ENCODE measurements at regions of chr2 and their contacts with region 1.

Region 1: DNA sequence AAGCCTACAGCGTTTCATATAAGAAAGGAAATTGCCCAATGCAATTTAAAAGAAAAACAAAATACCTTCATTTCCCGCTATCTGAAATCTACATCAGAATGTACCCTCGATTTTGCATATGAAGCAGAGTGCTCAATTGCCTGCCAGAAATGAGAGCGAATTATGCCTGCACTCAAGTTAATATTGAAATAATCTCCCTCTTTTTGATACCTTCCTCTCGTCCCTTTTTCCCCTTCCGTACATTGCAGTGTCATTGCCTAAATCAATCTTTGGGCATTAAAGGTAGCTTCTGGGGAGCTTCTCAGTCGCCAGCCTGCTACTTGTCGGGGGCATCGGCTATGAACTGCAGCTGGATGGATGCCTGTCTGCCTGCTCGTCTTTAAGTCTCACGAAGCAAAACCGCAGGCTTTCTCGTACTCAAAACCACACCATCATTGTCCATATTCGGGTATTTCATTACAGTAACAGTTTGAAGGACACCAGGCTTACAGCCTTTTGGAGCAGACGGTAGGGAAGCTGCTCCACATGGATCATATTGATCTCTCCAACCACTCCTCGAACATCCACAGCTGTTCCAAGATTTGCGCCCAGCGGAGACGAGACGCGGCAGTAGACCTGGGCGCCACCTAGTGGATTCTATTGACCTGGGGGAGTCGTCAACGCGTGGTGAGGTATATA is 64.0 kb upstream of the HNRNPA3 start:
- DNase-seq: peak; percentile 45
- ATAC-seq: peak; percentile 95
- H3K4me3 ChIP-seq: peak overlapping the region; percentile 69
- H3K27ac ChIP-seq: no peak overlapping the region
- H3K4me1 ChIP-seq: no peaks in the 10 kb centered on the region
- H3K27me3 ChIP-seq: peaks cover 0 to 2% of the 10 kb centered on the region in 2 experiments; a peak in 1 of 4 replicates
- CTCF ChIP-seq: peak; percentile 87 to 93 (median 92)
- EP300 ChIP-seq: 0 out of 4 replicates have a peak, but pooled peaks of 1 of the 2 experiments have one; percentile 13
- POLR2A ChIP-seq: no peak
- RAD21 ChIP-seq: peak; percentile 67

Region 2: GRCh38 chr2:176110975-176111663 is 1037.5 kb before region 1 on chr2:
- CTCF ChIA-PET with region 1: interaction called, 12 read pairs
- POLR2A ChIA-PET with region 1: no interaction called
- RAD21 ChIA-PET with region 1: no interaction called
- SMC1A ChIA-PET with region 1: no interaction called
- in situ Hi-C with region 1: no loop called
- intact Hi-C with region 1: no loop called
- DNase-seq: no peak
- ATAC-seq: peak; percentile 79
- H3K4me3 ChIP-seq: no peak overlapping the region
- H3K27ac ChIP-seq: no peak overlapping the region
- H3K4me1 ChIP-seq: no peaks in the 10 kb centered on the region
- H3K27me3 ChIP-seq: peaks cover 14 to 35% of the 10 kb centered on the region in 2 experiments
- CTCF ChIP-seq: peak; percentile 60 to 79 (median 60); a peak in 5 of 6 replicates
- EP300 ChIP-seq: no peak
- POLR2A ChIP-seq: no peak
- RAD21 ChIP-seq: 0 out of 2 replicates have a peak, but pooled peaks have one; percentile 24

Region 3: DNA sequence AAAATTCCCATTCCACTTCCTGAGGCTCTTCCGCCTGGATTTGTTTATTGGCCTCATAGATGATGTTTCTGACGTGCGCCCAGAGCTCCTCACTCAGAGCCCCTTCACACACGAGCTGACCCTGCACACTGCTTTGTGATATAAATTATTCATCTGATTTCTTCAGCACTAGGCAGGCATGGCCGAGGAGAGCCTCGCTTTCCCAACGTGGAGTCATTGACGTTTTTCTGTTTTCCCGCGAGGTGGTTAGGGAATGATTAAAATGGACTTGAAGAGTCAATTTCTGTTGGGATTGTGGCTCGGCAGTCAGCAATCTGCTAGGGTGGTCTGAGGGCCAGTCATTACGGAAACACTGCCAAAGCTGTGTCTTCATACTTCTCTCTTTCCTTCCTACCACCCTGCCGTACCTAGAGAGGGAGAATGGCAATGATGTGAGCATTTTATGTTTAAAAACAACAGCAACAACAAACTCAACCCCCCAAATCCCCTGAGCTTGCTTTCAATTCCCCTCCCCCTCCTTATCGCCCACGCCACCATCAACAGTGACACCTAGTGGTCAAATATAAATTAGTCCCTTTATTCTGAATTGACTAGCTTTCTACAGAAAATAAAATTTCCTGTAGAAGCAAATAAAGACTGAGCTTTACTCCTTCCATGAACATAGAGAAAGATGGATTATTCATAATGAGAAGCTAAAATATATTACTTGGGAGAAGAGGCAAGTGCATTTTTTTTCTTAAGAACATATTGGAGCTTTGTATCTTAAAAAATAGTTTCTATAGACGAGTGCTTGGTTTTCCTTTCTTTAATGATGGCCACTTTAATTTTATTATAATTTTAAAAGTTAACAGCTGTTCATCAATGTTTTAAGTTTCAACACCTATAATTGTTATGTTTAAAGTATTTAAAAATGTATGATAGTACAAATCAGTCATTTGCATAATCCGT is 594.2 kb before region 1 on chr2:
- CTCF ChIA-PET with region 1: interaction called, 19 read pairs
- POLR2A ChIA-PET with region 1: no interaction called
- RAD21 ChIA-PET with region 1: interaction called, 18 read pairs
- SMC1A ChIA-PET with region 1: interaction called, 16 read pairs
- in situ Hi-C with region 1: no loop called
- intact Hi-C with region 1: loop called (anchors 5 kb)
- DNase-seq: peak; percentile 8
- ATAC-seq: peak; percentile 79
- H3K4me3 ChIP-seq: peak overlapping the region; percentile 32; the same call in 1 of the 2 replicates
- H3K27ac ChIP-seq: no peak overlapping the region
- H3K4me1 ChIP-seq: no peaks in the 10 kb centered on the region
- H3K27me3 ChIP-seq: 0 out of 4 replicates have a peak, but pooled peaks cover 0 to 3% of the 10 kb centered on the region in 2 experiments
- CTCF ChIP-seq: peak; percentile 58 to 78 (median 70)
- EP300 ChIP-seq: no peak
- POLR2A ChIP-seq: no peak
- RAD21 ChIP-seq: peak; percentile 82

Region 4: DNA sequence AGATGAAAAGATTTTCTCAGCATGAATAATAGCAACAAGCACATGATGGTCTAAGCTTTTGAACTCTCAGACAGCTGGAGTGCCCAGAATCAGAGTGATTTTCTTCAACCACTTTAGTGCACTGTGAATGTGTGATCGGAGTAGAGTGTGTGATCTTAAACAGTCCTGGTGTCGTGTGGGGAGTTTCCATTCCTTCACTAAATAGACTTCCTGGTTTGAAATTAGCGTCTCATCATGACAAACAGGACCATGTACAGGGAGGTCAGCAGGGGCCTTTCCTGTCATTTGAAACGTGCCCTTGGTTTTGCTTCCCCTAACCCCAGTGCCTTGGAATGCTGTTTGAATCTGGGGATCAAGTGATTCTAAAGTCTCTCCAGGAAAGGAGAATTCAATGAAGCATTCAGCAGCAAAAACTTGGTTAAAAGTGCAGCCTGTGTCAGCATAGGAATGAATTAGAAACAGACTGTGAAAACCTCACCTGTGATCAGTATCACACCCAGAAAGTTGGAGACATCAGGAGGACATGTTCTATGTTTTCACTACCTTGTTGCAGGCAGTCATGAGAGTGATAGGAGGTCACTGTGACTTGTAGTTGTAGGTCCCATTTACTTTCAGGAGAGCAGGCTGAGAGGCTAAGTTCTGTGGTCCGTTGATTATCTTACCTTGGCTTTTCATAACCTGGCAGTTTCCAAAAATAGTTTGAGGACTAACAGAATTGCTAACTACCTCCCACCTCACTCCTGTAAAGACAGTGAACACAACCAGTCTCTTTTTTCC is 479.0 kb before region 1 on chr2:
- CTCF ChIA-PET with region 1: interaction called, 11 read pairs
- POLR2A ChIA-PET with region 1: no interaction called
- RAD21 ChIA-PET with region 1: interaction called, 6 read pairs
- SMC1A ChIA-PET with region 1: interaction called, 11 read pairs
- in situ Hi-C with region 1: loop called (anchors 5 kb)
- intact Hi-C with region 1: no loop called
- DNase-seq: peak; percentile 37
- ATAC-seq: peak; percentile 86
- H3K4me3 ChIP-seq: no peak overlapping the region
- H3K27ac ChIP-seq: peak overlapping the region; percentile 48; the same call in 1 of the 2 replicates
- H3K4me1 ChIP-seq: peaks cover 4% of the 10 kb centered on the region
- H3K27me3 ChIP-seq: no peaks in the 10 kb centered on the region
- CTCF ChIP-seq: no peak
- EP300 ChIP-seq: 0 out of 4 replicates have a peak, but pooled peaks of 1 of the 2 experiments have one; percentile 22
- POLR2A ChIP-seq: no peak
- RAD21 ChIP-seq: no peak

Region 5: GRCh38 chr2:176830362-176830761 is 318.3 kb before region 1 on chr2:
- CTCF ChIA-PET with region 1: interaction called, 250 read pairs
- POLR2A ChIA-PET with region 1: no interaction called
- RAD21 ChIA-PET with region 1: interaction called, 8 read pairs
- SMC1A ChIA-PET with region 1: interaction called, 6 read pairs
- in situ Hi-C with region 1: no loop called
- intact Hi-C with region 1: loop called (anchors 5 kb)
- DNase-seq: no peak
- ATAC-seq: peak; percentile 80
- H3K4me3 ChIP-seq: no peak overlapping the region
- H3K27ac ChIP-seq: no peak overlapping the region
- H3K4me1 ChIP-seq: no peaks in the 10 kb centered on the region
- H3K27me3 ChIP-seq: no peaks in the 10 kb centered on the region
- CTCF ChIP-seq: peak in 2 of 3 experiments; percentile 20 to 21; a peak in 3 of 6 replicates
- EP300 ChIP-seq: no peak
- POLR2A ChIP-seq: no peak
- RAD21 ChIP-seq: no peak

Region 6: DNA sequence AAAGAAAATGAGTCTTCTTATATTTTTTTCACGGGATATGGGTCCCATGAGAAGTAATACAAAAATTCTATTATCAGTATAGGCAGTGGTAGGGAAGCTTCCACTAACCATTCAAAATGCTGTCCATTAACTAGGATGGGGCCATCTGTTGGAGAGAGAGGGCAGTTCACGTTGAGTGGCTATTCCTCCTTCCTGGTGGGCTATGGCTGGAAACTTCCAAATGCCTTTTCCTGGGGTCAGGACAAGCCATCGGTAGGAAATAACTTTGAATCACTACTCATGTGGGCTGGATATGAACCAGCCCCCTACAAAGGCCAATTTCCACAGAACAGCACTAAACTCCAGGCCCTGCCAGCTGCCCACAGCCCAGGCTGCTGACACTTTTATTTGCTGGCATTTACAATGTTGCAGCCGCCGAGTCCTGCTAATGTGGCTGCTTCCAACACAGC is 92.1 kb before region 1 on chr2:
- CTCF ChIA-PET with region 1: interaction called, 16 read pairs
- POLR2A ChIA-PET with region 1: no interaction called
- RAD21 ChIA-PET with region 1: interaction called, 5 read pairs
- SMC1A ChIA-PET with region 1: interaction called, 3 read pairs
- in situ Hi-C with region 1: no loop called
- intact Hi-C with region 1: no loop called
- DNase-seq: no peak
- ATAC-seq: peak; percentile 61; the same call in 2 of the 3 replicates
- H3K4me3 ChIP-seq: no peak overlapping the region
- H3K27ac ChIP-seq: no peak overlapping the region
- H3K4me1 ChIP-seq: no peaks in the 10 kb centered on the region
- H3K27me3 ChIP-seq: no peaks in the 10 kb centered on the region
- CTCF ChIP-seq: peak in 1 of 3 experiments; percentile 3; a peak in 2 of 6 replicates
- EP300 ChIP-seq: no peak
- POLR2A ChIP-seq: no peak
- RAD21 ChIP-seq: 0 out of 2 replicates have a peak, but pooled peaks have one; percentile 14

Region 7: GRCh38 chr2:177183860-177184259 is 35.2 kb after region 1 on chr2:
- CTCF ChIA-PET with region 1: no interaction called
- POLR2A ChIA-PET with region 1: no interaction called
- RAD21 ChIA-PET with region 1: no interaction called
- SMC1A ChIA-PET with region 1: no interaction called
- in situ Hi-C with region 1: no loop called
- intact Hi-C with region 1: no loop called
- DNase-seq: no peak
- ATAC-seq: no peak
- H3K4me3 ChIP-seq: no peak overlapping the region
- H3K27ac ChIP-seq: no peak overlapping the region
- H3K4me1 ChIP-seq: no peaks in the 10 kb centered on the region
- H3K27me3 ChIP-seq: no peaks in the 10 kb centered on the region
- CTCF ChIP-seq: no peak
- EP300 ChIP-seq: no peak
- POLR2A ChIP-seq: no peak
- RAD21 ChIP-seq: no peak

Region 8: GRCh38 chr2:177419274-177419673 is 270.7 kb after region 1 on chr2:
- CTCF ChIA-PET with region 1: interaction called, 11 read pairs
- POLR2A ChIA-PET with region 1: no interaction called
- RAD21 ChIA-PET with region 1: no interaction called
- SMC1A ChIA-PET with region 1: no interaction called
- in situ Hi-C with region 1: no loop called
- intact Hi-C with region 1: no loop called
- DNase-seq: no peak
- ATAC-seq: no peak
- H3K4me3 ChIP-seq: no peak overlapping the region
- H3K27ac ChIP-seq: no peak overlapping the region
- H3K4me1 ChIP-seq: no peaks in the 10 kb centered on the region
- H3K27me3 ChIP-seq: no peaks in the 10 kb centered on the region
- CTCF ChIP-seq: no peak
- EP300 ChIP-seq: no peak
- POLR2A ChIP-seq: no peak
- RAD21 ChIP-seq: no peak

Measured in GM12878 (cell line).